ENCODE measurements at regions of chr6 and their contacts with region 1.

Region 1: GRCh38 chr6:108294727-108295625 is at the start of gene AFG1L:
- DNase-seq: peak; percentile 77 to 90 (median 83)
- ATAC-seq: peak; percentile 89
- H3K4me3 ChIP-seq: peak within 1 kb of the TSS; percentile 91
- H3K4me3 Mint-ChIP-seq: peak within 1 kb of the TSS; percentile 97
- H3K27ac ChIP-seq: peak within 1 kb of the TSS; percentile 93 to 95
- H3K27ac Mint-ChIP-seq: peak within 1 kb of the TSS; percentile 96
- H3K4me1 ChIP-seq: peaks cover 17% of the 10 kb centered on the region
- H3K4me1 Mint-ChIP-seq: peaks cover 30% of the 10 kb centered on the region
- H3K27me3 ChIP-seq: no peaks in the 10 kb centered on the region
- H3K27me3 Mint-ChIP-seq: no peaks in the 10 kb centered on the region
- CTCF ChIP-seq: no peak
- total RNA-seq, gene AFG1L: 3.0 to 3.9 TPM

Region 2: DNA sequence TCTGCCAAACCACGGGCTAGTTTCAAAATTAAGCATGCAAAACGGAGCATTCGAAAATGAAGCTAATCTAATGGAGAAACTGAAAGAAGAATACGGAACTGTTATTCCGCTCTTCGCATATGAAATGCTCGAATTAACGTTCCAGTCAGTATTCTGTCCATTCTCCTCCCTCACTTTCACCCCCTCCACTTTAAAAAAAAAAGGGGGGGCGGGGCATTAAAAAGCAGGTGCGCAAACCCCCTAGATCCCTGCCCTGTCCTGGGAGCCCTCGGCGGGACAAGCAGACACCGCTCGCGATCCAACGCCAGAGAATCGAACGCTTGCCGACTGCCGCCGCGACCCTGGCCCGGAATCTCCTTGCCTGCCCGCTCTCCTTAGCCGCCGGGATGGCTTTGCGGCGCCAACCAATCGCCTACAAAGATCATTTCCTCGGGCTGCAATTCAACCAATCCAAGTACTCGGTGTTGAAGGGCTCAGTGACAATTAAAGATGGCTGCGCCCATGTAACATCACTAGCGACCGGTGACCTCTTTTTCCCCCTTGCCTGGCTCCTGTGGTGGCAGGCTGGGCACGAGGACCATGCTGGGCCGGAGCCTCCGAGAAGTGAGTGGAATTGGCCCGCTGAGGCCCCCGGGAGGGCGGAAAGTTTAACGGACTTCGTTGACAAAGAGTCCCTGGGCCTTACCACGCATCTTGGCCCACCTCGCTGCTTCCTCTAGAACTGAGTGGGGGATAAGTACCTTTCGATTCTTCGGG is 1665.7 kb before region 1 on chr6 and contains the starts of genes QRSL1 and RTN4IP1:
- CTCF ChIA-PET with region 1: no interaction called
- POLR2A ChIA-PET with region 1: no interaction called
- intact Hi-C with region 1: loop called in 1 of 2 experiments (anchors 10 kb)
- DNase-seq: peak; percentile 67 to 95 (median 78)
- ATAC-seq: peak; percentile 94
- H3K4me3 ChIP-seq: peak within 1 kb of the TSS; percentile 79
- H3K4me3 Mint-ChIP-seq: peak within 1 kb of the TSS; percentile 97
- H3K27ac ChIP-seq: peak within 1 kb of the TSS; percentile 64 to 83
- H3K27ac Mint-ChIP-seq: peak within 1 kb of the TSS; percentile 96
- H3K4me1 ChIP-seq: peaks cover 15% of the 10 kb centered on the region
- H3K4me1 Mint-ChIP-seq: peaks cover 42% of the 10 kb centered on the region
- H3K27me3 ChIP-seq: no peaks in the 10 kb centered on the region
- H3K27me3 Mint-ChIP-seq: no peaks in the 10 kb centered on the region
- CTCF ChIP-seq: no peak
- total RNA-seq, gene QRSL1: 7.3 to 9.3 TPM
- total RNA-seq, gene RTN4IP1: 2.4 to 2.5 TPM

Region 3: DNA sequence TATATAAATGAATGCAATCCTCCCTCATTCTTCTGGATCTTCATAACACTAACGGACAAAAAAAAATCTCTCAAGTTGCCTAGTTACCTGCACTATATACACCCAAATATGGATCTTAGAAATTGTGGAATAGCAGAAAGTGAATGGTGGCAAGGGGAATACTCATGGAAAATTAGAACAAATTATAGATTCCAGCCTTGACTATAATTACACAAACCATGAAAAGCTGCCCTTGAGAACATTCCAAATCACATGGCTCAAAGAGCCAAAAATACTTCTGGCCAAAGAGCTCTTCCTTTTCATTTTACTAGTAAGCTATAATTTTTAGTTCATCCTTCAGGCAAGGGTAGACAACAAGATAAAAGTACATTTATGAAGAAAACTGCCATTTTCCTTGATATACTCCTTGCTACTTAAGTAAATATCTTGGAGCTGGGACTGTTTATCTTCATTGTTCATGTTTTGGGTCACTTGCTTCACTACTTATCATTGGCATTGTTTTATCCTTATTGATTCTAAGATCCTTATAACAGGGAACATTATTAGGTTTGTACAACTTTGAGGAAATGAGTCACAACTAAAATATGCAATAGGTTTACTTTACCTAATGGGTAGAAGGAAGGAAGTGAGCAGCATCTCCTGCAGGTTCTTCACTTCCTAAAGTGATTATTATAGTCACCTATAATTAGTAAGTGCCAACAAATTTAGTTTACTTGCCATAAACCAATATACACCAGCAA is 1273.4 kb before region 1 on chr6:
- CTCF ChIA-PET with region 1: no interaction called
- POLR2A ChIA-PET with region 1: no interaction called
- intact Hi-C with region 1: loop called in 1 of 2 experiments (anchors 10 kb)
- DNase-seq: no peak
- ATAC-seq: no peak
- H3K4me3 ChIP-seq: no peak overlapping the region
- H3K4me3 Mint-ChIP-seq: no peak overlapping the region
- H3K27ac ChIP-seq: no peak overlapping the region
- H3K27ac Mint-ChIP-seq: no peak overlapping the region
- H3K4me1 ChIP-seq: no peaks in the 10 kb centered on the region
- H3K4me1 Mint-ChIP-seq: no peaks in the 10 kb centered on the region
- H3K27me3 ChIP-seq: no peaks in the 10 kb centered on the region
- H3K27me3 Mint-ChIP-seq: no peaks in the 10 kb centered on the region
- CTCF ChIP-seq: no peak

Region 4: GRCh38 chr6:107459283-107460082 is 835.5 kb before region 1 on chr6 and contains the start of gene PDSS2:
- CTCF ChIA-PET with region 1: interaction called, 3 read pairs
- POLR2A ChIA-PET with region 1: no interaction called
- intact Hi-C with region 1: loop called in 1 of 2 experiments (anchors 10 kb)
- DNase-seq: peak; percentile 89 to 98 (median 96)
- ATAC-seq: peak; percentile 96
- H3K4me3 ChIP-seq: peak within 1 kb of the TSS; percentile 91
- H3K4me3 Mint-ChIP-seq: peak within 1 kb of the TSS; percentile 94
- H3K27ac ChIP-seq: peak within 1 kb of the TSS; percentile 71 to 79
- H3K27ac Mint-ChIP-seq: peak within 1 kb of the TSS; percentile 97
- H3K4me1 ChIP-seq: peaks cover 16% of the 10 kb centered on the region
- H3K4me1 Mint-ChIP-seq: peaks cover 23% of the 10 kb centered on the region
- H3K27me3 ChIP-seq: no peaks in the 10 kb centered on the region
- H3K27me3 Mint-ChIP-seq: no peaks in the 10 kb centered on the region
- CTCF ChIP-seq: no peak
- total RNA-seq, gene PDSS2: 5.8 to 6.6 TPM

Region 5: GRCh38 chr6:107964671-107965340 is 330.2 kb before region 1 on chr6:
- CTCF ChIA-PET with region 1: no interaction called
- POLR2A ChIA-PET with region 1: no interaction called
- intact Hi-C with region 1: loop called in 1 of 2 experiments (anchors 2 kb)
- DNase-seq: no peak
- ATAC-seq: no peak
- H3K4me3 ChIP-seq: no peak overlapping the region
- H3K4me3 Mint-ChIP-seq: no peak overlapping the region
- H3K27ac ChIP-seq: no peak overlapping the region
- H3K27ac Mint-ChIP-seq: no peak overlapping the region
- H3K4me1 ChIP-seq: no peaks in the 10 kb centered on the region
- H3K4me1 Mint-ChIP-seq: no peaks in the 10 kb centered on the region
- H3K27me3 ChIP-seq: no peaks in the 10 kb centered on the region
- H3K27me3 Mint-ChIP-seq: no peaks in the 10 kb centered on the region
- CTCF ChIP-seq: no peak

Region 6: GRCh38 chr6:108260809-108261569 is 34.0 kb before region 1 on chr6 and contains the start of gene SNX3:
- CTCF ChIA-PET with region 1: interaction called, 6 read pairs
- POLR2A ChIA-PET with region 1: interaction called, 66 read pairs
- intact Hi-C with region 1: loop called (anchors 1 kb)
- DNase-seq: peak; percentile 71 to 95 (median 83)
- ATAC-seq: peak; percentile 80
- H3K4me3 ChIP-seq: peak within 1 kb of the TSS; percentile 98
- H3K4me3 Mint-ChIP-seq: peak within 1 kb of the TSS; percentile 88
- H3K27ac ChIP-seq: peak within 1 kb of the TSS; percentile 88 to 90
- H3K27ac Mint-ChIP-seq: peak within 1 kb of the TSS; percentile 91
- H3K4me1 ChIP-seq: peaks cover 34% of the 10 kb centered on the region
- H3K4me1 Mint-ChIP-seq: peaks cover 36% of the 10 kb centered on the region
- H3K27me3 ChIP-seq: no peaks in the 10 kb centered on the region
- H3K27me3 Mint-ChIP-seq: no peaks in the 10 kb centered on the region
- CTCF ChIP-seq: no peak
- total RNA-seq, gene SNX3: 39.8 to 40.8 TPM